K562 (cell line): ENCODE measurements at regions of chr13 and their contacts with region 1.

Region 1: DNA sequence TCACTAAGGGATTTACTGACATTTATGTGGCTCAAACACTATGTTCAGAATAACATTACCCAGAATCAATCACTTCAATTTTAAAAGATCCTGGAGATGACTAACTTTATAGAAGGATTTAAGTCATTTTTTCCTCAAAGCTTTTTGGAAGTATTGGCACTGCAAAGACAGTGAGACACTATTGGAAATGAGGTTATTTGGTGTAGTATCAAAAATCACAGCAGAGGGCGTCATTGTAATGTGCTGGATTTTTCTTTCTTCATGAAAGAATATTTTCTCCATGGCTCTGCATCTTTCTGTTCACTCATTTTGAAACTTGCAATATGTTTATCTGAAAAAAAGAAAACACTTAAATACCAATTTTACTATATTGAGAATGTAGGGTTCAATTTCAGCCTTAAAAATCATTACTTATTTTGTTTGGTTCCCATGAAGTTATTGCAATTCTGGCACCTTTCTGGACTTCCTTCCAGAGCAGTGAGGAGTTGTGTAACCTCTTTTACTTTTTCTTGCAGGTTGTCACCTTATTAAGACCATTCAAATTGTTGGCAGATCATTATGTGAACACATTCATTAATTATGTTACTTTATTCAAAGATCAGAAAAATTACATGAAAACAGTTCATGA is 3.7 kb upstream of the CSNK1A1L start:
- DNase-seq: peak in 1 of 4 experiments; percentile 11
- ATAC-seq: no peak
- H3K4me3 ChIP-seq: no peak overlapping the region
- H3K27ac ChIP-seq: no peak overlapping the region
- H3K4me1 ChIP-seq: peaks cover 0 to 5% of the 10 kb centered on the region in 2 experiments; a peak in 1 of 5 replicates
- H3K27me3 ChIP-seq: peaks cover 0 to 7% of the 10 kb centered on the region in 2 experiments; a peak in 2 of 5 replicates
- CTCF ChIP-seq: peak; percentile 16 to 53 (median 24); a peak in 3 of 6 replicates
- EP300 ChIP-seq: no peak
- POLR2A ChIP-seq: no peak
- RAD21 ChIP-seq: peak in 1 of 2 experiments; percentile 54; a peak in 3 of 4 replicates

Region 2: DNA sequence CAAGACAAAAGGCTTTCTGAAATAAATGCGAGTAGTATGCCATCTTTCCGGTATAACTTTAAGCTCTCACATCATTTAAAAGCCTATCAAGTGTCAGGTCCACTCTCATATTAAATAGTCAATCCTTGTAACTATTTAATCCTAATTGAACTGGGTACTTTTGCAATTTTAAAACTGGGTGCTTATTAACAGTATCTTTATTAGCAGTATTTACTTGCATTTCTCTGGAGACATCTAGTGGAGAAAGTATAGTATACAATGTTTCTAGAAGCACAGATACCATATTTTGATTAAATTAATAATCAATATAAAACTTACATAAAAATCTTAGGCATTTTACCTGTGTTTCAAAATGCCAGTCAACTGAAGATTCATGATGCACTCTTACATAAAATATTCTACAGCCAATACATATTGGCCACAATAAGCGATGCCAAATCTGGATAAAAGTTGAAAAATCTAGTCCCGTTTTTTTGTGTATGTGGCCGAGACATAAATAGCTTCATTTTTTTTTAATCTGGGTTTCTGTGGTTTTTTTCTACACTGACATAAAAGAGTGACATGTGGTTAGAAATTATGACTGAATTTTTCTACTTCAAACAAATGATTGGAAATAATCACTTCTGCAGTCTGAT is 493.7 kb after region 1 on chr13:
- CTCF ChIA-PET with region 1: interaction called, 3 read pairs
- POLR2A ChIA-PET with region 1: no interaction called
- in situ Hi-C with region 1: loop called (anchors 25 kb)
- intact Hi-C with region 1: loop called (anchors 2 kb)
- DNase-seq: no peak
- ATAC-seq: no peak
- H3K4me3 ChIP-seq: no peak overlapping the region
- H3K27ac ChIP-seq: no peak overlapping the region
- H3K4me1 ChIP-seq: no peaks in the 10 kb centered on the region
- H3K27me3 ChIP-seq: no peaks in the 10 kb centered on the region
- CTCF ChIP-seq: peak in 1 of 3 experiments; percentile 16; a peak in 1 of 6 replicates
- EP300 ChIP-seq: no peak
- POLR2A ChIP-seq: no peak
- RAD21 ChIP-seq: no peak; a peak in 1 of 4 replicates

Region 3: GRCh38 chr13:38473305-38473704 is 1364.1 kb after region 1 on chr13:
- CTCF ChIA-PET with region 1: no interaction called
- POLR2A ChIA-PET with region 1: no interaction called
- in situ Hi-C with region 1: no loop called
- intact Hi-C with region 1: no loop called
- DNase-seq: no peak
- ATAC-seq: no peak
- H3K4me3 ChIP-seq: no peak overlapping the region
- H3K27ac ChIP-seq: no peak overlapping the region
- H3K4me1 ChIP-seq: no peaks in the 10 kb centered on the region
- H3K27me3 ChIP-seq: no peaks in the 10 kb centered on the region
- CTCF ChIP-seq: no peak
- EP300 ChIP-seq: no peak
- POLR2A ChIP-seq: no peak
- RAD21 ChIP-seq: no peak

Region 4: GRCh38 chr13:38582133-38582532 is 1473.0 kb after region 1 on chr13:
- CTCF ChIA-PET with region 1: no interaction called
- POLR2A ChIA-PET with region 1: no interaction called
- in situ Hi-C with region 1: loop called (anchors 25 kb)
- intact Hi-C with region 1: no loop called
- DNase-seq: peak; percentile 6 to 50 (median 11)
- ATAC-seq: peak; percentile 78
- H3K4me3 ChIP-seq: no peak overlapping the region
- H3K27ac ChIP-seq: no peak overlapping the region
- H3K4me1 ChIP-seq: no peaks in the 10 kb centered on the region
- H3K27me3 ChIP-seq: no peaks in the 10 kb centered on the region
- CTCF ChIP-seq: peak; percentile 30 to 50 (median 32); a peak in 3 of 6 replicates
- EP300 ChIP-seq: no peak
- POLR2A ChIP-seq: no peak
- RAD21 ChIP-seq: peak; percentile 40 to 53

Region 5: DNA sequence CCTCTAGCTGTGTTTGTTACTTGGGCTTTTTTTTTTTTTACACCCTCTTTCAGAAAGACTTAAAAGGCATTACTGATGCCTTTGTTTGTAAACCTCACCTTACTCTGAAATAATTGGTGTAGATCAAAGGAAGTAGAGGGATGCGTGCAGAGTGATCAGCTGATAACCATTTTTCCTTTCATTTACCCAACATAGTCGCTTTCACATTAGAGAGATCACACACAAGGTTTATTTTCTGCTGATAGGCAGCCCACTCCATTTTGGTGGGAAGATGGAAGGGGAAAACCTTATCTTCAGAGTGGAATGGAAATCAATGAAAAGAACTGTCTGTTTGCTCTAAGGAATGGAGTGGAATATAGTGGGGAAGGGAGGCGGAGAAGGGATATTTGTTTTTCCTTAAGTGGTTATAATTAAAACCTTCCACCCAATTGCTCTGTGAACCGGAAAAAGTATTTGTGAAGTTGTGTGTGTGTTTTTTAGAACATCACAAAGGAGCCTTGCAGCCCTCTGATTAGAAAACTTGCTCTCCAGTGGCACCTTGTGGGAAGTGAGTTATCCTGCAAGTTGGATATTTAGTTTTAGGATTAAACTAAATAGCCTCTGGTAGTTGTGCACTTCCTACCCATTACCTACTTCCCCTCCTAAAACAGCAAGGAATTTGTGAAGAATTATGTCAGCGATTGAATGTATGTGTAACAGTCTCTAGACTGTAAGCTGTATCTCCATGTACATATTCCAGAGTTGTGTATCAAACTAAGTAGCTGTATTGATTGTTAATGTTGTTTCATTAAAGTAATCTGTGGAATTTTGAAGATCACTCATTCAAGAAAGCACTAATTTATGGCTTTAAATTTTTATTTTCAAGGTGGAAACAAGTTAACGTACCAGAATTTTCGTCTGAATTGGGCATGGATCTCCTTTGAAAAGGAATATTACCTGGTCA is 1654.5 kb after region 1 on chr13:
- CTCF ChIA-PET with region 1: no interaction called
- POLR2A ChIA-PET with region 1: no interaction called
- in situ Hi-C with region 1: no loop called
- intact Hi-C with region 1: loop called (anchors 10 kb)
- DNase-seq: peak in 2 of 4 experiments; percentile 14 to 24
- ATAC-seq: peak; percentile 83
- H3K4me3 ChIP-seq: no peak overlapping the region
- H3K27ac ChIP-seq: no peak overlapping the region
- H3K4me1 ChIP-seq: no peaks in the 10 kb centered on the region
- H3K27me3 ChIP-seq: no peaks in the 10 kb centered on the region
- CTCF ChIP-seq: peak; percentile 40 to 44 (median 41); a peak in 4 of 6 replicates
- EP300 ChIP-seq: no peak
- POLR2A ChIP-seq: no peak
- RAD21 ChIP-seq: peak in 1 of 2 experiments; percentile 44; a peak in 2 of 4 replicates